Psoas muscle (tissue), 8 donors: ENCODE measurements at regions of chr22 and their contacts with region 1.

Region 1: DNA sequence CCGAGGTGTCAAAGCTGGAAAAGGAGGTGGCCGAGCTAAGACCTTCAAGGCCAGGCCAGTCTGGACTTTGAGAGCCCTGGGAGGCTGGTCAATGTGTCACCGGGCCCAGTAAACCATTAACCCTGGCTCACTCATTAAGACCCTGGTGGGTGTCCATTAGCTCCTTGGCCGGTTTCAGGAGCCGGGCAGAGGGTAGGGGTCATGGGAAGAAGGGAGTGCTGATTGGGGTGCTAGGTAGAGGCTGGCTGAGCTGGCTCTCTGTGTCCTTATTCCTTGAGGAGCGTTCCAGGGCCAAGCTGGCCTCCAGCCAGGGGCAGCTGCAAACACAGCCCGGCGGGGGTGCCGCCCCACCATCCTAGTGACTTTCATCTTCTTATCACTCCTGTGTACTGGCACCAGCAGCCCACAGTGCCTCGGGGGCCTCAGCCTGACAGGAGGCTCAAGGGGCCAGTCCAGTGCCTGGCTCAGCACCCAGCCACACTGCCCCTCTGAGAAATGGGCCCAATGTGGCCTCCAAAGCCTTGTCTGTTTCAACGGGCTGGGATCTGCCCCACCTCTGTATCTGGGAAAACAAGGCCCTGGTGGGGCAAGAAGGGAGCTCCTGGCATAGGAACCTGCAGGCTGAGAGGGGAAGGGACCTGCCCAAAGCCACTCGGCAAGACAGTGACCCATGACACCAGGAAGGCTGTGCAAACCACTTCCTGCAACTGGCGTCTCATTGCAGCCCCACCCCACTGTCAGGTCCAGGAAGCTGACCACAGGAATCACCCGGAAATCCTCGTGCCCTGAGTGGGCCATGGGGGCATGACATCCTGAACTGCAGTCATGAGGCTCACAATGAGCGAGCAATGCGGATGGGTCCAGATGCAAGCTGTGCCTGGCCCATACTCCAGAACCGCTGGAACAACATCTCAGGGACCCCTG is 15.1 kb upstream of the RGL4 start:
- DNase-seq: peak in 1 of 2 donors; percentile 85
- ATAC-seq: peak in 3 of 4 donors; percentile 21 to 64 (median 59)
- H3K4me3 ChIP-seq: no peak overlapping the region
- H3K27ac ChIP-seq: no peak overlapping the region
- H3K4me1 ChIP-seq: peaks cover 11% of the 10 kb centered on the region
- H3K27me3 ChIP-seq: no peaks in the 10 kb centered on the region
- CTCF ChIP-seq: no peak

Region 2: GRCh38 chr22:23749841-23750301 is 74.1 kb after region 1 on chr22:
- intact Hi-C with region 1: loop called in 1 of 2 experiments (anchors 5 kb)
- DNase-seq: no peak
- ATAC-seq: peak in 1 of 4 donors; percentile 7
- H3K4me3 ChIP-seq: peak overlapping the region; percentile 91
- H3K27ac ChIP-seq: peak overlapping the region; percentile 10
- H3K4me1 ChIP-seq: peaks cover 10% of the 10 kb centered on the region
- H3K27me3 ChIP-seq: no peaks in the 10 kb centered on the region
- CTCF ChIP-seq: no peak

Region 3: GRCh38 chr22:23816156-23816976 is 140.6 kb after region 1 on chr22:
- intact Hi-C with region 1: no loop called
- DNase-seq: peak in 1 of 2 donors; percentile 69
- ATAC-seq: peak; percentile 77 to 85 (median 82)
- H3K4me3 ChIP-seq: no peak overlapping the region
- H3K27ac ChIP-seq: peak overlapping the region; percentile 12
- H3K4me1 ChIP-seq: no peaks in the 10 kb centered on the region
- H3K27me3 ChIP-seq: no peaks in the 10 kb centered on the region
- CTCF ChIP-seq: no peak